Activated naive CD4-positive, alpha-beta T cell treated with anti-CD3 and anti-CD28 coated beads, Interleukin-2, amount 10 ng/mL, durations not matched to agents 7 days and 5 days (primary cell): ENCODE measurements at regions of chr1 and their contacts with region 1.

Region 1: DNA sequence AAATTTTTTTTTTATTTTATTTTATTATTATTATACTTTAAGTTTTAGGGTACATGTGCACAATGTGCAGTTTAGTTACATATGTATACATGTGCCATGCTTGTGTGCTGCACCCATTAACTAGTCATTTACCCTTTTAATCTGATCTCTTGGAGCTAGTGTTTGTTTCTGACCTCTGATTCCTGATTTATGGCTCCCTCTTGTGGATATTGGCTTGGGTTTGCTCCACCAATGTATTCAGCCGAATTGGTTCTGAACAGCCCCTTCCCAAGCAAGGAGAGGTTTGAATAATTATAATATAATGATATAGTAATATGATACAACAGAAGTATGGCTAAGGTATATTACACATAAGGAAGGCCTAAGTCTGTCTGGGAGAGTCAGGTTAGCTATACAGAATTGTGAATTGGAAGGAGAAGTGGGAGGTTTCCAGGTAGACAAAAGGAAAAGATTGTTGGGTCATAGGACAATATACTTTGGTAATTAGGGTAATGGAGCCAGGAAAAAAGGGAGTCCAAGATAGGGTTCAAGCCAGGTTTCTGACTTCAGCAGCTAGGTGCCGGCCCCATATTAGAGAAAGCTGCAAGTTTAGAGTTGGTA is 53.1 kb upstream of the HMCN1 start:
- DNase-seq: peak; percentile 33
- H3K4me3 Mint-ChIP-seq: no peak overlapping the region
- H3K27ac Mint-ChIP-seq: no peak overlapping the region
- H3K4me1 Mint-ChIP-seq: peaks cover 27% of the 10 kb centered on the region
- H3K27me3 Mint-ChIP-seq: no peaks in the 10 kb centered on the region

Region 2: GRCh38 chr1:185238447-185238846 is 442.7 kb before region 1 on chr1:
- CTCF ChIA-PET with region 1: interaction called, 33 read pairs
- DNase-seq: no peak
- H3K4me3 Mint-ChIP-seq: no peak overlapping the region
- H3K27ac Mint-ChIP-seq: no peak overlapping the region
- H3K4me1 Mint-ChIP-seq: peaks cover 14% of the 10 kb centered on the region
- H3K27me3 Mint-ChIP-seq: no peaks in the 10 kb centered on the region

Region 3: DNA sequence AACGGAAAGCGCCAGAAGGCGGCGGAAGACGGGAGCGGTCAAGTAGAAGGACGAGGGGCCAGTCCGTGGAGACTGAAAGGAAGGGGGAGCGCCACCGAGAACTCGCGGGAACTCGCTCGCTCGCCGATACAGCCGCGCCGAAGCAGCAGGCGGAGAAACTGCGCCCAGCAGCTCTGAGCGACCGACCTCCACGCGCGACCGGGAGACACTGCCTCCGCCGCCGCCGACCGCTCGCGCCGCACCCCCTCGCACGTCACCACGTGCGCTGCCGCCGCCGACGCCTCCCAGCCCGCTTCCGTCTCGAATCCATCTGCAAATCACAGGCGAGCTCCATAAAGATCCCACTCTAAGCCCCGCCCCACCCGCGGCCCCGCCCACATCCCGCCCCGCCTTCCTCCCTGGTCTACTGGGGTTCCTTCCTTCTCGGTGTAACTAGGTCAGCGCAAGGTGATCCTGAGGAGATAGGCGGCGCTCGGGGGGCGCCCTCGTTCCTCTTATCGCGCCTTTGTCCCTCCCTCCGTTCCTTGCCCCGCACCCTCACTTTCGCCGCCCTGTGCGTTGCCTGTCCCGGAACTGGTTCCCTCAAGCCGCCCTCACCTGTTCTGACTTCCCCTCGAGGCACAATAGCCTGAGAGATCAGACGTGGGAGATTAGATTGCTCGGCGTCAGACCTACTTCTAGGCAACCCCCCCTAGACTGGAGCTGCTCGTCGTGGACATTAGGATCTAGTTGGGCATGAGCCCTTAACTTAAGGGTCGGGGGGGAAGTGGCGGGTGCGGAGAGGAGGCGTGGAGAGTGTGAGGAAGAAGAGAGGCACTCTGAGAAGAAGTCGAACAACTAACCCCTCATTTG is 363.9 kb before region 1 on chr1 and contains the start of gene IVNS1ABP:
- CTCF ChIA-PET with region 1: interaction called, 12 read pairs
- DNase-seq: peak; percentile 96
- H3K4me3 Mint-ChIP-seq: peak within 1 kb of the TSS; percentile 95
- H3K27ac Mint-ChIP-seq: peak within 1 kb of the TSS; percentile 98
- H3K4me1 Mint-ChIP-seq: peaks cover 55% of the 10 kb centered on the region
- H3K27me3 Mint-ChIP-seq: no peaks in the 10 kb centered on the region

Region 4: DNA sequence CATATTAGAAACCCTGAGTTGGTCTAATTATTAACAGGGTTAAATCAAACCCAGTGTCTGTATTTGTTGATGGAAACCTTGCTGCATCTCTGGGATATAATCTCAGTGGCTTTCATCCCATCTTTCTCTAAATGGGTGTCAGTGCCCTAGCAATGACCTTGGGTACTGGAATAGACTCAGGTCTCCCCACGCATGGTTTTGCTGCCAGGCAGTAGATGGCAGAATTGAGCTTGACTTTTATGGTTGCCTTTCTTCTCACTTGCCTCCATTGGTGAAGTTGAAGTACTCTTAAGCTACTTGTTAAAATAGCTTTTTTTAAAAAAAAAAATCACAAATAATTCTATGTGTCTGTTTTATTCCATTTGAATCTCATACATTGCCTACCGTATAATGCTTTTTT is 28.8 kb before region 1 on chr1:
- CTCF ChIA-PET with region 1: interaction called, 22 read pairs
- DNase-seq: no peak
- H3K4me3 Mint-ChIP-seq: no peak overlapping the region
- H3K27ac Mint-ChIP-seq: no peak overlapping the region
- H3K4me1 Mint-ChIP-seq: peaks cover 9% of the 10 kb centered on the region
- H3K27me3 Mint-ChIP-seq: no peaks in the 10 kb centered on the region

Region 5: GRCh38 chr1:185670187-185670627 is 10.9 kb before region 1 on chr1:
- CTCF ChIA-PET with region 1: interaction called, 41 read pairs
- DNase-seq: peak; percentile 64
- H3K4me3 Mint-ChIP-seq: no peak overlapping the region
- H3K27ac Mint-ChIP-seq: no peak overlapping the region
- H3K4me1 Mint-ChIP-seq: peaks cover 28% of the 10 kb centered on the region
- H3K27me3 Mint-ChIP-seq: no peaks in the 10 kb centered on the region